Psoas muscle (tissue), 8 donors: ENCODE measurements at regions of chr15 and their contacts with region 1.

Region 1: DNA sequence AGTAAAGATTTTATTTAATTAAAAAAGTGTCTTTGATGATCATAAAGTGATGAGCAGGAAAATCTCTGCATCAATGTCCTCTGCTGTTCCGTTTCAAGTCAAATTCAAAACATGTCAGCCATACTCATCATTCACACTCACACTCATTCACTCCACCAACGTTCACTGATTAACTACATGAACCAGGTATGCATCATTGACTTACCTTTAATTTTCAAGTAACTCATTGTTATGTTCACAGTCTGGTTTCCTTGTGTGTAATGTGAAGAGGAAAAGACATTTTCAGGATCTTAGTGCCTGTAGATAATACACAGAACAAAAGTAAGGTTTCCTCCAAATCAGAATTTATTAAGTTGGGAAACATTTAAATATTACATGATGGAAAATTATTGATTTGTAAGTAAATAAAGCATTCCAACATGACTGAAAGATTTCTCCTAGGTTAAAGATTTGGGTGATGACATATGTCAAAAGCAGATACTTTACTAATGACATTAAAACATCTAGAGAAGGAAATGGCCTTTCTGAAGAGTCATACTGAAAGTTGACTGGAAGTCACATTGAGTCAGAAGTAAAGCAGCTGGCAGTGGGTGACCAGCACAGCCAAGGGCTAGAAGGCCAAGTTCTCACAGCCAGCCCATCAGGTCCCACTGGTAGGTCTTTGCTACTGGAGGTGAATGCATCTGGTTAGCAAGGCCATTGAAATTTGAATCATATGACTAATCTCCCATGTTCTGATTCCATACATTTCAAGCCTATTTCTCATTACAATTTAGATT is 251.9 kb downstream of the CDIN1 start:
- DNase-seq: no peak
- ATAC-seq: no peak
- H3K4me3 ChIP-seq: no peak overlapping the region
- H3K27ac ChIP-seq: no peak overlapping the region
- H3K4me1 ChIP-seq: no peaks in the 10 kb centered on the region
- H3K27me3 ChIP-seq: no peaks in the 10 kb centered on the region
- CTCF ChIP-seq: no peak

Region 2: DNA sequence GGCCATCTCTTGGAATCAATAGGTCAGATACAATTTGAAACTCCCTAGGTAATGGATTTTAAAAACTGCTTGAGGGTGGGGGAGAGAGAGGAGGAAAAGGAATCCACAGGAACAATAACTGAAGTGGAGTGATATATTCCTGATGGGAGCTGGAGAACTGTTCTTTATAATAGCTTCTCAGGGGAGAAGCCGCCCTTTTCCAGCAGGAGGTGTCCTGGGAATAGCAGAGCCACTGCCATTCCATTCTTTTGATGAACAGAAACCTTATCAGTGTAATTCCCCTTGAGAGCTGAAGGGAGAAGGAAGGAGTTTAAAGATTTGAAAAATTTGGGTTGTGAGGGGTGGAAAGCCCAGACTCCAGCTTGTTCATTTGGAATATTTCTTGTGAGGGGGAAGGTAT is 780.4 kb before region 1 on chr15:
- intact Hi-C with region 1: loop called in 1 of 2 experiments (anchors 5 kb)
- DNase-seq: no peak
- ATAC-seq: no peak
- H3K4me3 ChIP-seq: no peak overlapping the region
- H3K27ac ChIP-seq: no peak overlapping the region
- H3K4me1 ChIP-seq: no peaks in the 10 kb centered on the region
- H3K27me3 ChIP-seq: peaks cover 0 to 2% (median 0%) of the 10 kb centered on the region in 3 donors
- CTCF ChIP-seq: no peak

Region 3: GRCh38 chr15:36769098-36769497 is 62.2 kb before region 1 on chr15:
- intact Hi-C with region 1: loop called in 1 of 2 experiments (anchors 10 kb)
- DNase-seq: no peak
- ATAC-seq: peak in 2 of 4 donors; percentile 38 to 62
- H3K4me3 ChIP-seq: no peak overlapping the region
- H3K27ac ChIP-seq: no peak overlapping the region
- H3K4me1 ChIP-seq: no peaks in the 10 kb centered on the region
- H3K27me3 ChIP-seq: no peaks in the 10 kb centered on the region
- CTCF ChIP-seq: no peak

Region 4: DNA sequence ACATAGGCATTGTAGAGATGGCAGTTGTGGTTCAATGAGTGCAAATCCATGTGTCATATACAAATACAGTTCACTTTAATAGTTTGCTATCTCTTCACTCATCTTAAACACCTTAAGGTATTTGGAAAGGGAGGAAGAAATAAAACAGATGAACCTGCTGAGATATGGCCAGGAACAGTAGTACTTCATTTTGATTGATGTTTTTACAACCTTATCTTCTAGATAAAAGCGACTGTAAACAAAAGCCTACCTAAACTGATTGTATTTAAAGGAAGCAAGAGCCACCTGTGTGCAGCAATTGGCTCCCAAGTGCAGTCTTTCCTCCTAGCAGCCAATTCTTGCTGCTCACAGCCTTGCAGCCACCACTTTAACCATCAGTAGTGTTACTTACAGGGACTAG is 34.2 kb before region 1 on chr15:
- intact Hi-C with region 1: no loop called
- DNase-seq: no peak
- ATAC-seq: no peak
- H3K4me3 ChIP-seq: no peak overlapping the region
- H3K27ac ChIP-seq: no peak overlapping the region
- H3K4me1 ChIP-seq: no peaks in the 10 kb centered on the region
- H3K27me3 ChIP-seq: no peaks in the 10 kb centered on the region
- CTCF ChIP-seq: no peak

Region 5: GRCh38 chr15:36810656-36811449 is 20.5 kb before region 1 on chr15:
- intact Hi-C with region 1: loop called in 1 of 2 experiments (anchors 2 kb)
- DNase-seq: no peak
- ATAC-seq: no peak
- H3K4me3 ChIP-seq: no peak overlapping the region
- H3K27ac ChIP-seq: no peak overlapping the region
- H3K4me1 ChIP-seq: no peaks in the 10 kb centered on the region
- H3K27me3 ChIP-seq: no peaks in the 10 kb centered on the region
- CTCF ChIP-seq: no peak